PC-3 (cell line): ENCODE measurements at regions of chr1 and their contacts with region 1.

Region 1: DNA sequence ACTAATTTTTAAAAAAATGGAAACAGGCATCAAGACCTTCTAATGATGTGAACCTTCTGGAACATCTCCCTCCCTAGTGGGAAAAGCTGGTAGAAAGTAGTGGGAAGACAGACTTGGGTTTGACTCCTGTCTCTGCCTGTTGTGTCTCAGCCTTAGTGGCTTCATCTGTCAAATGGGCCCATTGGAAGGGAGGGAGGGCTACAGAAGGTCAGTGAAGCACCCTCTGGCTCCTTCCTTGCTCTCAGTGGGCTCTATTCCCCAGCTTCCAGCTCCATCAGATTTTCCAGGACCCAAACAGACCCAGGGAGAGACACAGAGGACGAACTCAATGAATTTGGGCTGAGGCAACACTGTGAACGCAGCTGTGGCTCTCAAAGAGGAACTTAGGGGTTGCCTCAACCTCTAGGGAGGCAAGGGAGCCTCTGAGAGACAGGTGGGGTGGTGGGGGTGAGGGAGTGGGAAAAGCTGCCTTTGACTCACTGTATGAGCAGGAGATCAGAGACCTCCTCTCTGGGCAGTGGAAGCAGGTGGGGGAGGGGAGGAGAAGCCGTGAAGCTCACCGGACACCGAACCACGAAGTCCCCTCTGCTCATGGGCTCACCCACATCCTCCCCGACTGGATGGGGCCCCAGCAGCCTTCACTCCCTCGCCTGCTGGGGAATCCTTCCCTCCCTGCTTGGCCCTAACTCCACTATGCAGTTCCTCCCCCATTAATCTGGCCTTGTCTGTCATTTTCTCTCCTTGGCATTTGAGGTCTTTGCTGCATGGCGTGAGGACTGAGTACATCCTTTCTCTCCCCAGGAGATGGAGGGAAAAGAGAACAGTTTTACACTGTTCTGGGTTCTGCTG is 4.4 kb downstream of the CNR2 start:
- DNase-seq: no peak
- ATAC-seq: no peak
- H3K4me3 ChIP-seq: no peak overlapping the region
- H3K27ac ChIP-seq: no peak overlapping the region
- H3K4me1 ChIP-seq: peaks cover 12% of the 10 kb centered on the region
- H3K27me3 ChIP-seq: no peaks in the 10 kb centered on the region
- CTCF ChIP-seq: no peak

Region 2: GRCh38 chr1:23682946-23683345 is 225.8 kb before region 1 on chr1:
- CTCF ChIA-PET with region 1: interaction called, 13 read pairs
- POLR2A ChIA-PET with region 1: no interaction called
- intact Hi-C with region 1: no loop called
- DNase-seq: no peak
- ATAC-seq: no peak
- H3K4me3 ChIP-seq: no peak overlapping the region
- H3K27ac ChIP-seq: no peak overlapping the region
- H3K4me1 ChIP-seq: no peaks in the 10 kb centered on the region
- H3K27me3 ChIP-seq: no peaks in the 10 kb centered on the region
- CTCF ChIP-seq: no peak

Region 3: GRCh38 chr1:23979878-23980724 is 71.4 kb after region 1 on chr1 and contains the start of gene SRSF10:
- CTCF ChIA-PET with region 1: no interaction called
- POLR2A ChIA-PET with region 1: no interaction called
- intact Hi-C with region 1: no loop called
- DNase-seq: peak; percentile 99
- ATAC-seq: peak; percentile 96
- H3K4me3 ChIP-seq: peak within 1 kb of the TSS; percentile 94
- H3K27ac ChIP-seq: peak within 1 kb of the TSS; percentile 81
- H3K4me1 ChIP-seq: peaks cover 26% of the 10 kb centered on the region
- H3K27me3 ChIP-seq: no peaks in the 10 kb centered on the region
- CTCF ChIP-seq: peak; percentile 28; the same call in 1 of the 2 replicates
- total RNA-seq, gene SRSF10: 109 and 121 TPM in 2 replicates